A549 (cell line): ENCODE measurements at regions of chr12 and their contacts with region 1.

Region 1: GRCh38 chr12:45990468-45991283 is at the start of gene SCAF11:
- DNase-seq: peak; percentile 91 to 100
- ATAC-seq: peak; percentile 85 to 91
- H3K4me3 ChIP-seq: peak within 1 kb of the TSS; percentile 69
- H3K27ac ChIP-seq: peak within 1 kb of the TSS; percentile 94 to 97
- H3K4me1 ChIP-seq: peaks cover 31% of the 10 kb centered on the region
- CTCF ChIP-seq: peak; percentile 84
- EP300 ChIP-seq: peak in 1 of 2 experiments; percentile 10; a peak in 1 of 5 replicates
- POLR2A ChIP-seq: peak; percentile 92
- RAD21 ChIP-seq: peak; percentile 89 to 95
- polyA plus RNA-seq, gene SCAF11: 64.2 and 110 TPM in 2 replicates

Region 2: GRCh38 chr12:46005151-46005797 is 14.6 kb after region 1 on chr12:
- CTCF ChIA-PET with region 1: interaction called, 21 read pairs
- POLR2A ChIA-PET with region 1: no interaction called
- DNase-seq: peak; percentile 9 to 14
- ATAC-seq: no peak
- H3K4me3 ChIP-seq: no peak overlapping the region
- H3K27ac ChIP-seq: no peak overlapping the region
- H3K4me1 ChIP-seq: no peaks in the 10 kb centered on the region
- CTCF ChIP-seq: peak; percentile 55
- EP300 ChIP-seq: no peak
- POLR2A ChIP-seq: no peak
- RAD21 ChIP-seq: peak; percentile 33 to 43; a peak in 4 of 5 replicates